K562 (cell line): ENCODE measurements at regions of chr7 and their contacts with region 1.

Region 1: DNA sequence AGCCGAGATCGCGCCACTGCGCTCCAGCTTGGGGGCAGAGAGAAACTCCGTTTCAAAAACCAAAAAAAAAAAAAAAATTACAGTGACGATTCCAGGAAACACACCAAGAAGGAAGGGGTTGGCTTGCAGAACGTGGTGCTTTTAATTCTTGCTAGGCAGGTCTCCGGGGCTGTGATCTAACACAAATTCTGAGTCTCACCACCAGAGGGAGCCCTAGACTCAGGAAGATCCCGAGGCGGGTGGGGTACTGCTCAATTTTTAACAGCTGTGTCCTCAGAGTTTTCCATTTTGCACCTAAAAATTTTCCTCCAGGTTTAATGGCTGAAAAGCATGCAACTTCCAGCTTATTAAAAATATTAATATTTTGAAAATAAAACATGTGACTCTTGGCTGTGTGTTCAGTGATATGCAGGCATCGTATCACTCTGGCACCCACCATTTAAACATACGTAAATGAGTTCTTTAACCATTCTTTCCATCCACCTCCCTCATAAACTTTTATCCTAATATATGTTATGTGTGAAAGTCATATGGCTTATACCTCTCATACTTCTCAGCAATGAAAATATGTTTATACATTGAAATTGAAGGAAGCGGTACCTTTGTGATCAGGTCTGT is 26.5 kb upstream of the NUB1 start:
- DNase-seq: peak; percentile 87 to 95 (median 92)
- ATAC-seq: peak; percentile 98
- H3K4me3 ChIP-seq: no peak overlapping the region
- H3K27ac ChIP-seq: no peak overlapping the region
- H3K4me1 ChIP-seq: peaks cover 0 to 3% of the 10 kb centered on the region in 2 experiments; a peak in 1 of 5 replicates
- H3K27me3 ChIP-seq: peaks cover 3 to 8% of the 10 kb centered on the region in 2 experiments; a peak in 3 of 5 replicates
- CTCF ChIP-seq: peak; percentile 89 to 98 (median 94)
- EP300 ChIP-seq: no peak
- POLR2A ChIP-seq: no peak
- RAD21 ChIP-seq: peak; percentile 97 to 98

Region 2: DNA sequence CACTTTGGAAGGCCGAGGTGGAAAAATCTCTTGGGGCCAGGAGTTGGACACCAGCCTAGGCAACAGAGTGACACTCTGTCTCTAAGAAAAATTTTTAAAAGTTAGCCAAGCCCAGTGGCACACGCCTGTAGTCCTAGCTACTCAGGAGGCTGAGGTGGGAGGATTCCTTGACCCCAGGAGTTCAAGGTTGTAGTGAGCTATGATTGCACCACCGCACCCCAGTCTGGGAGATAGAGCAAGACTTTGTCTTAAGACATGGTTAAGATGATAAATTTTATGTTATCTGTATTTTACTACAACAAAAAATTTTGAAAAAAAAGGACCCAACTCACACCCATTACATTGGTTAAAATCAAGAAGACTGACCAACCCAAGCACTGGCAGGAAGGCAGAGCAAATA is 22.3 kb before region 1 on chr7:
- CTCF ChIA-PET with region 1: no interaction called
- POLR2A ChIA-PET with region 1: no interaction called
- in situ Hi-C with region 1: no loop called
- intact Hi-C with region 1: no loop called
- DNase-seq: no peak
- ATAC-seq: no peak
- H3K4me3 ChIP-seq: no peak overlapping the region
- H3K27ac ChIP-seq: no peak overlapping the region
- H3K4me1 ChIP-seq: no peaks in the 10 kb centered on the region
- H3K27me3 ChIP-seq: peaks cover 26 to 29% of the 10 kb centered on the region in 2 experiments
- CTCF ChIP-seq: no peak
- EP300 ChIP-seq: no peak
- POLR2A ChIP-seq: no peak
- RAD21 ChIP-seq: no peak

Region 3: DNA sequence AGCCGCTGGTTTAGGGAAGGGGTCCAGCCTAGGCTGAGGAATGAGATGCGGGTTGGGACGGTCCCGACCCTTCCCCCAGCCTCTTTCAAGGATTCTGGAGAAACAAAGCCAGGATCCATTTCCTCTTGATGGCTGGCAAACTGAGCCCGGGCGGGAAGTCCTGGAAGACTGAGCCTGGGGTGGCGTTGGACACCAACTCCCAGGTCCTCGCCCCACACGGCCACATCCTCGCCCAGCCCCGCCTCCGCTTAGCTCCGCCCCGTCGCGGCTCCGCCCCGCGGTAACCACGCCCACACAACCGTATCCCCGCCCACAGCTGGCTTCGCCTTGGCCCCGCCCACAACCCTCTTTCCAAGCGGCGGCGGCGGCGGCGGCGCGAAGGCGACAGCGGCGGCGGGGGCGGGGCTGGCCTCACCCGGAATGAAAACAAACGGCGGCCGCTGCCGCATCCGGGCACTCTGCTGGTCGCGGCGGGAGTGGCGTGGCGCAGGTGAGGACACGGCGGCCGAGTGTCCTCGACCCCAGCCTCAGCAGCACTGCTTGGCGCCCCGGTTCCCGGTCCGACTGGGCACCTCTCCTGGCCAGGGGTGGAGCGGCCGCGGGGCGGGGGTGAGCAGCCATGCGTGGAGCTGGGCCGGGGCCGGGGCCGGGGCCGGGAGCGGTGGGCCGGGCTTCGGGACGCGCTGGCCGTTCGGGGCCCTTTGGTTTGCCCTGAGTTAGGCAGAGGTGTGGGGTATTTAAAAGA is 26.4 kb after region 1 on chr7 and contains the start of gene NUB1:
- CTCF ChIA-PET with region 1: interaction called, 12 read pairs
- POLR2A ChIA-PET with region 1: interaction called, 6 read pairs
- in situ Hi-C with region 1: no loop called
- intact Hi-C with region 1: no loop called
- DNase-seq: peak; percentile 97 to 100 (median 98)
- ATAC-seq: peak; percentile 98
- H3K4me3 ChIP-seq: peak within 1 kb of the TSS; percentile 74
- H3K27ac ChIP-seq: peak within 1 kb of the TSS; percentile 62; the same call in 2 of the 3 replicates
- H3K4me1 ChIP-seq: peaks cover 5 to 9% of the 10 kb centered on the region in 2 experiments; a peak in 3 of 5 replicates
- H3K27me3 ChIP-seq: peaks cover 0 to 3% of the 10 kb centered on the region in 2 experiments; a peak in 2 of 5 replicates
- CTCF ChIP-seq: no peak
- EP300 ChIP-seq: 0 out of 2 replicates have a peak, but pooled peaks have one; percentile 16
- POLR2A ChIP-seq: peak; percentile 86
- RAD21 ChIP-seq: no peak
- polyA plus RNA-seq, gene NUB1: 43.2 to 63.4 TPM

Region 4: GRCh38 chr7:151351027-151351426 is 35.9 kb after region 1 on chr7:
- CTCF ChIA-PET with region 1: interaction called, 73 read pairs
- POLR2A ChIA-PET with region 1: interaction called, 3 read pairs
- in situ Hi-C with region 1: no loop called
- intact Hi-C with region 1: loop called (anchors 1 kb)
- DNase-seq: peak; percentile 57 to 72 (median 62)
- ATAC-seq: peak; percentile 79
- H3K4me3 ChIP-seq: no peak overlapping the region
- H3K27ac ChIP-seq: no peak overlapping the region
- H3K4me1 ChIP-seq: peaks cover 4 to 11% of the 10 kb centered on the region in 2 experiments; a peak in 4 of 5 replicates
- H3K27me3 ChIP-seq: no peaks in the 10 kb centered on the region
- CTCF ChIP-seq: peak; percentile 68 to 75 (median 71)
- EP300 ChIP-seq: no peak
- POLR2A ChIP-seq: no peak
- RAD21 ChIP-seq: peak in 1 of 2 experiments; percentile 30; a peak in 1 of 4 replicates

Region 5: DNA sequence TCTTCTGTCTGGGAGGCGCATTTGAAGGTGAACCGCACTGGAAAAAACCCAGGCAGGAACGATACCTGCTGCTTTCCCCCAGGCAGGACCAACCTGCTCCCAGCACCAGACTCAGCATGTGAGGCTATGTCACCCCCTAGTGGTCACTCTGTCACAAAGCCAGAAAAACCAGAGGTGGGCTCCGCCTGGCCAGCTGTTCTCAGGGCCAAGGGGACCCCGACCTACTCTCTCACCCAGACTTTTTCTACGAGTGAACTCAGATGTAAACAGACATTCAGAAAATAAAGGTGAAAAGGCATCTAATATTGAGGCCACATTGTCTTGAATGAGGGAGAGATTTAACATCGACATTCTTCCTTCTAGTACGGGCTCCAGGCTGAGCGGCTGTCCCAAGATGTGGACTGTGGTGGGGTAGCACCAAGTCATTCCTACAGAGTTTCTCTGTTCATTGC is 444.5 kb after region 1 on chr7:
- CTCF ChIA-PET with region 1: interaction called, 19 read pairs
- POLR2A ChIA-PET with region 1: no interaction called
- in situ Hi-C with region 1: no loop called
- intact Hi-C with region 1: loop called (anchors 2 kb)
- DNase-seq: peak; percentile 77 to 91 (median 86)
- ATAC-seq: peak; percentile 90
- H3K4me3 ChIP-seq: no peak overlapping the region
- H3K27ac ChIP-seq: no peak overlapping the region
- H3K4me1 ChIP-seq: peaks cover 0 to 7% of the 10 kb centered on the region in 2 experiments; a peak in 3 of 5 replicates
- H3K27me3 ChIP-seq: peaks cover 43 to 91% of the 10 kb centered on the region in 2 experiments
- CTCF ChIP-seq: peak; percentile 88 to 97 (median 96)
- EP300 ChIP-seq: no peak
- POLR2A ChIP-seq: no peak
- RAD21 ChIP-seq: peak; percentile 78 to 88